ENCODE measurements at regions of chr10 and their contacts with region 1.

Region 1: GRCh38 chr10:58334817-58335305 is at the start of gene UBE2D1:
- DNase-seq: peak; percentile 81
- ATAC-seq: peak; percentile 97
- H3K4me3 Mint-ChIP-seq: peak within 1 kb of the TSS; percentile 95
- H3K27ac Mint-ChIP-seq: peak within 1 kb of the TSS; percentile 69
- H3K4me1 Mint-ChIP-seq: peaks cover 32% of the 10 kb centered on the region
- H3K27me3 Mint-ChIP-seq: no peaks in the 10 kb centered on the region
- CTCF ChIP-seq: no peak
- total RNA-seq, gene UBE2D1: 13.3 and 15.0 TPM in 2 replicates

Region 2: GRCh38 chr10:58282615-58283014 is 52.2 kb before region 1 on chr10:
- CTCF ChIA-PET with region 1: no interaction called
- POLR2A ChIA-PET with region 1: no interaction called
- intact Hi-C with region 1: loop called (anchors 5 kb)
- DNase-seq: no peak
- ATAC-seq: peak; percentile 90
- H3K4me3 Mint-ChIP-seq: peak overlapping the region; percentile 57
- H3K27ac Mint-ChIP-seq: peak overlapping the region; percentile 88
- H3K4me1 Mint-ChIP-seq: peaks cover 27% of the 10 kb centered on the region
- H3K27me3 Mint-ChIP-seq: no peaks in the 10 kb centered on the region
- CTCF ChIP-seq: no peak

Region 3: DNA sequence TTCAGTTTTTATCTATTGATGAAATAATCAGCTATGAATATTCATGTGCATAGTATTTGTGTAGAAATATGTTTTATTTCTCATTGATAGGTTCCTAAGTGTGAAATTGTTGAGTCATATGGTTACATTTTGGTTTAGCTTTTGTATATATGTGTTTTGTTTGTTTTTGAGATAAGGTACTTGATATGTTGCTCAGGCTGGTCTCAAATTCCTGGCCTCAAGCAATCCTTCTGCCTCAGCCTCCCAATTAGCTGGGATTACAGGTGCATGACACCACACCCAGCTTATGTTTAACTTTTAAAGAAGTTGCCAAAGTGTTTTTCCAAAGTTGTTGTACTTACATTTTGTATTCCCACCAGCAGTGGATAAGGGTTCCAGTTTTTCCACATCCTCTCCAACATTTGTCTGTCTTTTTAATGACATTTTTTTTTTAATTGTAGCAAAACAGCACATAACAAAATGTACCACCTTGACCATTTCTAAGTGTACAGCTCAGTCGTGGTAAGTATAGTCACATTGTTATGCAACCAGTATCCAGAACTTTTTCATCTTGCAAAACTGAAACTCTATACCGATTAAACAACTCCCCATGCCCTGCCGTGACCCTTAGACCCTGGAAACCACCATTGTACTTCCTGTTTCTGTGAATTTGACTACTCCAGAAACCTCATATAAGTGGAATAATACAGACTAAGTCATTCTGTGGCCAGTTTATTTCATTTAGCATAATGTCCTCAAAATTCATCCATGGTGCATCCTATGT is 12.6 kb before region 1 on chr10:
- CTCF ChIA-PET with region 1: no interaction called
- POLR2A ChIA-PET with region 1: interaction called, 4 read pairs
- intact Hi-C with region 1: loop called (anchors 1 kb)
- DNase-seq: no peak
- ATAC-seq: peak; percentile 72
- H3K4me3 Mint-ChIP-seq: peak overlapping the region; percentile 3
- H3K27ac Mint-ChIP-seq: peak overlapping the region; percentile 26
- H3K4me1 Mint-ChIP-seq: peaks cover 15% of the 10 kb centered on the region
- H3K27me3 Mint-ChIP-seq: peaks cover 2% of the 10 kb centered on the region
- CTCF ChIP-seq: no peak

Region 4: GRCh38 chr10:58350619-58351323 is 15.9 kb after region 1 on chr10:
- CTCF ChIA-PET with region 1: no interaction called
- POLR2A ChIA-PET with region 1: interaction called, 16 read pairs
- intact Hi-C with region 1: no loop called
- DNase-seq: no peak
- ATAC-seq: no peak
- H3K4me3 Mint-ChIP-seq: no peak overlapping the region
- H3K27ac Mint-ChIP-seq: no peak overlapping the region
- H3K4me1 Mint-ChIP-seq: peaks cover 60% of the 10 kb centered on the region
- H3K27me3 Mint-ChIP-seq: no peaks in the 10 kb centered on the region
- CTCF ChIP-seq: no peak

Measured in activated B cell treated with CpG ODN at 0.5 μM for 24 hours (primary cell).